WTC11 (cell line): ENCODE measurements at regions of chr1 and their contacts with region 1.

Region 1: GRCh38 chr1:204213668-204214662 is at the start of gene GOLT1A:
- DNase-seq: peak; percentile 93
- ATAC-seq: peak; percentile 96
- H3K4me3 Mint-ChIP-seq: peak within 1 kb of the TSS; percentile 69
- H3K27ac Mint-ChIP-seq: peak within 1 kb of the TSS; percentile 93
- H3K4me1 Mint-ChIP-seq: peaks cover 6% of the 10 kb centered on the region
- H3K27me3 Mint-ChIP-seq: no peaks in the 10 kb centered on the region
- CTCF ChIP-seq: peak; percentile 47; the same call in 1 of the 2 replicates
- total RNA-seq, gene GOLT1A: 6.5 to 6.7 TPM (median 6.6 TPM) in 3 replicates

Region 2: GRCh38 chr1:204162231-204163074 is 51.5 kb before region 1 on chr1:
- CTCF ChIA-PET with region 1: interaction called, 36 read pairs
- POLR2A ChIA-PET with region 1: no interaction called
- DNase-seq: peak; percentile 94
- ATAC-seq: peak; percentile 98
- H3K4me3 Mint-ChIP-seq: no peak overlapping the region
- H3K27ac Mint-ChIP-seq: no peak overlapping the region
- H3K4me1 Mint-ChIP-seq: peaks cover 2% of the 10 kb centered on the region; the same call in 1 of the 2 replicates
- H3K27me3 Mint-ChIP-seq: peaks cover 8% of the 10 kb centered on the region
- CTCF ChIP-seq: peak; percentile 99

Region 3: GRCh38 chr1:204198151-204198994 is 15.6 kb before region 1 on chr1:
- CTCF ChIA-PET with region 1: interaction called, 12 read pairs
- POLR2A ChIA-PET with region 1: no interaction called
- DNase-seq: no peak
- ATAC-seq: peak; percentile 48
- H3K4me3 Mint-ChIP-seq: no peak overlapping the region
- H3K27ac Mint-ChIP-seq: no peak overlapping the region; the same call in 1 of the 2 replicates
- H3K4me1 Mint-ChIP-seq: peaks cover 12% of the 10 kb centered on the region
- H3K27me3 Mint-ChIP-seq: peaks cover 7% of the 10 kb centered on the region
- CTCF ChIP-seq: no peak

Region 4: DNA sequence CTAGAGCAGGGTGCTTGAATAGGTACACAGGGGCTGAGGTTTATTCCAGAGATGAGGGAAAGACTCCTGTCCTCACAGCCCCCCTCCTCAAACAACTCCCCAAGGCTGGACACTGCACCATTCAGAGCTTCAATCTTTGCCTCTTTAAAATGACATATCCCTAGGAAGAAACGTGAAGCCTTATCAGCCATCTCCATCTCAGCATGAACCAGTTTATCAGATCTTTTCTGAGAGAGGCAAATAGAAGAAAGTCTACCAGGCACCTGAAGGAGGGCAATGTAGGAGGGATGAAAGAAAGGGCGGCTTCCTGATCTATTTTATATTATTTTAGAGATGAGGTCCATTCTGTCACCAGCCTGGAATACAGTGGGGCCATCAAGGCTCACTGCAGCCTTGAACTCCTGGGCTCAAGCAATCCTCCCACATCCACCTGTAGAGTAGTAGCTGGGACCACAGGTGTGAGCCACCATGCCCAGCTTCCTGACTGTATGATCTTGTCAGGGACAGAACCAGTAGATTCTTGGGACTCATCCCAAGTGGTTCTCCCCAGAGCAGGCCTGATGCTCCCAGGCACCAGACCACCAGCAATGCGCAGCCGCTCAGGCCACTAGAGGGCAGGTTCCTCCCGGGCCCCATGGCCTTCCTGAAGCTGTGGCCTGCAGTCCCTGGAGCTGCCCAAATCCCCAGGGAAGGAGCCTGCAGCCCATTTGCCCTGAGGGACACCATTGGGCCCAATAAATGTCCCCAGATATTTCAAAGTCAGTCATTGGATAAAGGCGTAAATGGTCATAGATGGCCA is 44.2 kb after region 1 on chr1:
- CTCF ChIA-PET with region 1: interaction called, 96 read pairs
- POLR2A ChIA-PET with region 1: interaction called, 3 read pairs
- DNase-seq: peak; percentile 86
- ATAC-seq: peak; percentile 71
- H3K4me3 Mint-ChIP-seq: no peak overlapping the region
- H3K27ac Mint-ChIP-seq: no peak overlapping the region
- H3K4me1 Mint-ChIP-seq: peaks cover 36% of the 10 kb centered on the region
- H3K27me3 Mint-ChIP-seq: no peaks in the 10 kb centered on the region
- CTCF ChIP-seq: peak; percentile 57

Region 5: GRCh38 chr1:204350857-204351573 is 137.1 kb after region 1 on chr1:
- CTCF ChIA-PET with region 1: interaction called, 18 read pairs
- POLR2A ChIA-PET with region 1: no interaction called
- DNase-seq: peak; percentile 94
- ATAC-seq: peak; percentile 79
- H3K4me3 Mint-ChIP-seq: peak overlapping the region; percentile 51
- H3K27ac Mint-ChIP-seq: peak overlapping the region; percentile 54
- H3K4me1 Mint-ChIP-seq: peaks cover 32% of the 10 kb centered on the region
- H3K27me3 Mint-ChIP-seq: no peaks in the 10 kb centered on the region; the same call in 1 of the 2 replicates
- CTCF ChIP-seq: no peak

Region 6: DNA sequence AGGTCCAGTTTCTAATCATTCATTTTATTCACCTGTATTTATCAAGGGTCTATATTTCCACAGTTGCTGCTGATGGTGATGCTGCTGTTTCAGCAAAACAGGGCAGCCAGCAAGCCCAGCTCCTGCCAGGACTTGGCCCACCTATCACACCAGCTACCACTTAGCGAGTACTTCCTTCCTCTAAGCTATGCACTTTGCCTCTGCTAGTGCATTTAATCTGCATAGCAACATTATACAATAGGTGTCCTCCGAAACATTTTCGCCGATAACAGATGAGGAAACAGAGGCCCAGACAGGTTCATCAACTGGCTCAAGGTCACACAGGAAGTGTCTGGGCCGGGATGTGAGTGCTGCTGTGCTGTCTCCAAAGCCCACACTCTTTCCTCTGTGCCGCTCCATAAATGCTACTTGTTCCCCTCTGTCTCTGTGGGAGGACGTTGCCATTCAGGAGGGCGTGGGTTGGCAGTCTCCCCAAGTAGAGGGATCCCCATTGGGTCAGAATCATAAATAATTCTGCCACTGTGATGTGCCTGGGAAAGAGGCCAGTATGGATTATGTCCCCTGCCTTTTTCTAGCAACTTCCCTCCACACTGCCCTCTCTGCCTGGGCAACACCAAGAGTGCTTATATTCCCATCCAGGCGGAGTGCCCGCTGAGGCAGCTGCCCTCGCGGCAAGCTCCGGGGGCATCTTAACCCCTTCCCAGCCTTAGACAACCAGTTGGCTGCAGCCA is 155.2 kb after region 1 on chr1:
- CTCF ChIA-PET with region 1: interaction called, 118 read pairs
- POLR2A ChIA-PET with region 1: no interaction called
- DNase-seq: no peak
- ATAC-seq: no peak
- H3K4me3 Mint-ChIP-seq: no peak overlapping the region
- H3K27ac Mint-ChIP-seq: no peak overlapping the region
- H3K4me1 Mint-ChIP-seq: no peaks in the 10 kb centered on the region
- H3K27me3 Mint-ChIP-seq: no peaks in the 10 kb centered on the region; the same call in none of the 2 replicates
- CTCF ChIP-seq: no peak

Region 7: GRCh38 chr1:204692325-204692840 is 478.4 kb after region 1 on chr1:
- CTCF ChIA-PET with region 1: no interaction called
- POLR2A ChIA-PET with region 1: no interaction called
- DNase-seq: no peak
- ATAC-seq: peak; percentile 66
- H3K4me3 Mint-ChIP-seq: peak overlapping the region; percentile 28
- H3K27ac Mint-ChIP-seq: no peak overlapping the region
- H3K4me1 Mint-ChIP-seq: peaks cover 28% of the 10 kb centered on the region
- H3K27me3 Mint-ChIP-seq: peaks cover 56% of the 10 kb centered on the region
- CTCF ChIP-seq: no peak